SK-N-SH (cell line): ENCODE measurements at regions of chr2 and their contacts with region 1.

Region 1: GRCh38 chr2:71346065-71346464 is 14.5 kb downstream of the ZNF638 start:
- DNase-seq: no peak
- H3K4me3 ChIP-seq: no peak overlapping the region
- H3K27ac ChIP-seq: no peak overlapping the region
- H3K4me1 ChIP-seq: no peaks in the 10 kb centered on the region; a peak in 1 of 4 replicates
- H3K27me3 ChIP-seq: no peaks in the 10 kb centered on the region
- CTCF ChIP-seq: no peak
- EP300 ChIP-seq: no peak
- RAD21 ChIP-seq: no peak

Region 2: DNA sequence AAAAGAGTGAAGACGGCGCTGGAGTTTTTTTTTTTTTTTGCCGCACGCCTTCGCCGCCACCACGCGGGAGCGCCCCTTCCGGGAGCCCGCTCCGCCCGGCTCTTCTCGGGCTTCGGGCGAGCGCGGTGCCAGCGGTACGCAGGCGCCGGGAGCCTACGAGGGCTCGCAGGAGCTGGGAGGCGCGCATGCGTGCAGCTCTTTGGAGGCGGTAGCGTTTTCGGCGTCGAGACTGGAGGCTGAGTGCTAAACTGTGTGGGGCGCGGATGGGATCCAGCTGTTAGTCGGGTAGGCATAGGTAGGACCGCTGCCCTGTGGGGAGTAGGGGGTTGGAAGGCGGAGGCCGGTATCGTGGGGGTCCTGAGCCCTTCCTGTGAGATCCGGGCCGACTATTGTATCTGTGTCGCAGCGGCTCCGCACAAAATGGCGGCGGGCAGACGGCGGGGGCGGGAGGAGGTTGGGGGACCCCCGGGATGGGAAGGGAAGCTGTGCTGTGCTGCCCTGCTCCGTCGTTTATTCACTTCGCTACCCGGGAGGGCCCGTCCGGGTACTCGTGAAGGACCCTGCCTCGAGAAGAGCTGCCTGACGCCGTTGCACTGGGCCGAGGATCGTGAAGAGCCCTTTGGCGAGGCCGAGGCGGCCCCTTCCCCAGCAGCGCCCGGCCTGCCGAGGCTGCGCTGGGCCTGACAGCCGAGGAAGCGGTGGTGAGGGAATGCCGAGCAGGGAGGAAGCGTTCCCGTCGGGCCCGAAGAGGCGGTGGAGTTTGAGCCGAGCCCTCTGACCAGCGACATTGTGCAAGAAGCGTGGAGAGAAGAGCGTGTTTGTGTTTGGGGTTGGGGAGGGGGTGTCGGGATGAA is 14.3 kb before region 1 on chr2 and contains the start of gene ZNF638:
- CTCF ChIA-PET with region 1: interaction called, 19 read pairs
- POLR2A ChIA-PET with region 1: no interaction called
- DNase-seq: peak; percentile 97
- H3K4me3 ChIP-seq: peak within 1 kb of the TSS; percentile 91 to 94
- H3K27ac ChIP-seq: peak within 1 kb of the TSS; percentile 76 to 97
- H3K4me1 ChIP-seq: peaks cover 0 to 12% of the 10 kb centered on the region in 2 experiments; a peak in 3 of 4 replicates
- H3K27me3 ChIP-seq: no peaks in the 10 kb centered on the region
- CTCF ChIP-seq: peak; percentile 71
- EP300 ChIP-seq: no peak
- RAD21 ChIP-seq: peak; percentile 50
- polyA plus RNA-seq, gene ZNF638: 28.1 and 32.2 TPM in 2 replicates

Region 3: DNA sequence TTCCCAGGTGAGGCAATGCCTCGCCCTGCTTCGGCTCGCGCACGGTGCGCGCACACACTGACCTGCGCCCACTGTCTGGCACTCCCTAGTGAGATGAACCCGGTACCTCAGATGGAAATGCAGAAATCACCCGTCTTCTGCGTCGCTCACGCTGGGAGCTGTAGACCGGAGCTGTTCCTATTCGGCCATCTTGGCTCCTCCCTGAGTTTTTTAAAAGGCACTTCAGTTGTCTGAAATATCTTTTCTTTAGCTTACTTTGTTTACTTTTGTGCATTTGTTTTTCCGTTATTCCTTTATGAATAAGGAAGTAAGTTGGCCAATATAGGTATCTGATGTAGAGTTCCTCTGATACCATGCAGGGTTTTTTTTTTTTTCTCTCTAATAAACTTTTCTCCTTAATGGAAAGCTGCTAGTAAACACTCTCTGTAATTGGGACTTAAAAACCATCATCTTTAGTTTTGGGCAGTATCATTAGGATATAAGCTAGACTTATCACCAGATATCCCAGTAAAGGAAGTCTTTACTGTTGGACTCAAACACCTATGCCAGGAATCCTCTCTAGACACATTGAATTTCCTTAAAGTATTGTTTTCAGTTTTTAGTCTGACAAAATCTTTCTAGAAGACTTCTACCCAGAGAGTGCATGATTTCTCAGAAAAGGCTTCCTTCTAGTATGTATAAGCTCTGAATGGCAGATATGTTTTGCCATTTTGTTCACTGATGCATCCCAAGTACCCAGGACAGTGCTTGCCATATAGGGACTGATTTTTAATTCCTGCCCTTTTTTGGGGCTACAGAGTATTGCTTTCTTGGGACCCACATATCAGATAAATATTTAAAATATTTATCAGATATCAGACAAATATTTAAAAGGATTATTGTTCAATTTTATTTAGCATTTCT is 71.5 kb after region 1 on chr2:
- CTCF ChIA-PET with region 1: no interaction called
- POLR2A ChIA-PET with region 1: no interaction called
- DNase-seq: no peak
- H3K4me3 ChIP-seq: no peak overlapping the region
- H3K27ac ChIP-seq: no peak overlapping the region
- H3K4me1 ChIP-seq: no peaks in the 10 kb centered on the region; a peak in 1 of 4 replicates
- H3K27me3 ChIP-seq: no peaks in the 10 kb centered on the region
- CTCF ChIP-seq: no peak
- EP300 ChIP-seq: no peak
- RAD21 ChIP-seq: no peak

Region 4: DNA sequence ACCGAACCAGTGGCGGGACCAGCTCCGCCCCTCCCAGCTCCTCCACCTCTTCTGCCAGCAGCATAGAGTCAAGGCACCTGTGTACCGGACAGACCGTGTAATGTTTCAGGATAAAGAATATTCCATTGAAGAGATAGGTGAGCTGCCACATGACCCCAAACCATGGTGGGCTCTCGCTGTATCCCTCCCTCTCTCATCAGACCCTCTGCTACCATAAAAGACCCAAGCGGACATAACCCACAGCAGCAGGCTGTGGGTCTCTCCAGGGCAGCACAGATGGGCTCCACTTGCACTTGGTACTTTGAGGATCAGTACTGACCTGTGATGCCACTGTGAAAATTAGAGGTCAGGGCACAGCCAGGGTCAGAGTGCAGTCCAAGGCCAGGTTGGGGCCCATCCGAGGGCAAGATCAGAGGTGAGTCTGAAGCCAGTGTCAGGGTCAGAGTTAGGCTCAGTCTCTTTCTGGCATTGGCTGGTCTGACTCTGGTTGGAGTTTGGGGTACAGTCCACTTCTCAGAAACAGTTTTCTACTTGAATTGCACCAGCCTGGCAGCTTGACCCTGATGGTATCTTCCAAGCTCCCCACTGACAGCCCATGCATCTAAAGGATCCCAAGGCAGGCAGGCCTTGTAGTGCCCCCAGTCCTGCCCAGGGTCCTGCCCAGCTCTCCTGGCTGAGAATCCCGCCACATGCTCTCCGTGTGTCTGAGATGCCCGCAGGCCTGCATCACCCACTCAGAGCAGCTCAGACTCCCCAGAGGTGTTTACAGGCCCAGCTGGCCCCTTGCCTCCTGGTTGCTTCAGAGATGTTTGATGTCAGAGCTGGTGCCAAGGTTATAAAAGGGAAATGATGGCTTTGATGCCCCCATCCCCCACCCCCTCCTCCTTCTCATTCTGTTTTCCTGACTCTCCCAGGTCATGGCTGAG is 319.4 kb after region 1 on chr2:
- CTCF ChIA-PET with region 1: no interaction called
- POLR2A ChIA-PET with region 1: no interaction called
- DNase-seq: no peak
- H3K4me3 ChIP-seq: no peak overlapping the region
- H3K27ac ChIP-seq: no peak overlapping the region
- H3K4me1 ChIP-seq: no peaks in the 10 kb centered on the region
- H3K27me3 ChIP-seq: no peaks in the 10 kb centered on the region; the same call in 1 of the 2 replicates
- CTCF ChIP-seq: no peak
- EP300 ChIP-seq: no peak
- RAD21 ChIP-seq: no peak

Region 5: GRCh38 chr2:71700658-71701397 is 354.8 kb after region 1 on chr2:
- CTCF ChIA-PET with region 1: no interaction called
- POLR2A ChIA-PET with region 1: no interaction called
- DNase-seq: no peak
- H3K4me3 ChIP-seq: no peak overlapping the region
- H3K27ac ChIP-seq: no peak overlapping the region
- H3K4me1 ChIP-seq: peaks cover 0 to 7% of the 10 kb centered on the region in 2 experiments; a peak in 1 of 4 replicates
- H3K27me3 ChIP-seq: no peaks in the 10 kb centered on the region
- CTCF ChIP-seq: no peak
- EP300 ChIP-seq: no peak
- RAD21 ChIP-seq: no peak